HCT116 (cell line): ENCODE measurements at regions of chr1 and their contacts with region 1.

Region 1: GRCh38 chr1:154546264-154547063 is 12.0 kb downstream of the UBE2Q1 start:
- DNase-seq: peak; percentile 63
- ATAC-seq: peak; percentile 98
- H3K4me3 ChIP-seq: no peak overlapping the region
- H3K27ac ChIP-seq: no peak overlapping the region
- H3K4me1 ChIP-seq: peaks cover 0 to 10% of the 10 kb centered on the region in 2 experiments; a peak in 2 of 4 replicates
- H3K27me3 ChIP-seq: 0 out of 2 replicates have a peak, but pooled peaks cover 4% of the 10 kb centered on the region
- CTCF ChIP-seq: peak; percentile 67 to 92 (median 88)
- POLR2A ChIP-seq: no peak
- RAD21 ChIP-seq: peak; percentile 94

Region 2: GRCh38 chr1:154183045-154183915 is 363.2 kb before region 1 on chr1:
- CTCF ChIA-PET with region 1: no interaction called
- POLR2A ChIA-PET with region 1: no interaction called
- RAD21 ChIA-PET with region 1: no interaction called
- intact Hi-C with region 1: loop called (anchors 10 kb)
- DNase-seq: peak; percentile 97
- ATAC-seq: peak; percentile 96
- H3K4me3 ChIP-seq: peak overlapping the region; percentile 90 to 98
- H3K27ac ChIP-seq: peak overlapping the region; percentile 78
- H3K4me1 ChIP-seq: peaks cover 19 to 38% of the 10 kb centered on the region in 2 experiments
- H3K27me3 ChIP-seq: no peaks in the 10 kb centered on the region
- CTCF ChIP-seq: no peak
- POLR2A ChIP-seq: peak; percentile 90
- RAD21 ChIP-seq: no peak

Region 3: GRCh38 chr1:154324669-154325582 is 221.5 kb before region 1 on chr1 and contains the start of gene ATP8B2:
- CTCF ChIA-PET with region 1: interaction called, 8 read pairs
- POLR2A ChIA-PET with region 1: no interaction called
- RAD21 ChIA-PET with region 1: interaction called in 1 of 2 experiments, 4 read pairs
- intact Hi-C with region 1: loop called (anchors 10 kb)
- DNase-seq: peak; percentile 59
- ATAC-seq: peak; percentile 65
- H3K4me3 ChIP-seq: peak within 1 kb of the TSS; percentile 77 to 79
- H3K27ac ChIP-seq: peak within 1 kb of the TSS; percentile 79
- H3K4me1 ChIP-seq: peaks cover 26 to 49% of the 10 kb centered on the region in 2 experiments
- H3K27me3 ChIP-seq: no peaks in the 10 kb centered on the region
- CTCF ChIP-seq: peak; percentile 75 to 94 (median 93)
- POLR2A ChIP-seq: no peak
- RAD21 ChIP-seq: peak; percentile 49
- total RNA-seq, gene ATP8B2: 22.1 TPM

Region 4: GRCh38 chr1:154352581-154353459 is 193.6 kb before region 1 on chr1:
- CTCF ChIA-PET with region 1: interaction called, 3 read pairs
- POLR2A ChIA-PET with region 1: no interaction called
- RAD21 ChIA-PET with region 1: interaction called in 1 of 2 experiments, 3 read pairs
- intact Hi-C with region 1: loop called (anchors 10 kb)
- DNase-seq: no peak
- ATAC-seq: peak; percentile 76
- H3K4me3 ChIP-seq: peak overlapping the region; percentile 45 to 57
- H3K27ac ChIP-seq: peak overlapping the region; percentile 72
- H3K4me1 ChIP-seq: peaks cover 21 to 25% of the 10 kb centered on the region in 2 experiments
- H3K27me3 ChIP-seq: no peaks in the 10 kb centered on the region
- CTCF ChIP-seq: no peak
- POLR2A ChIP-seq: no peak
- RAD21 ChIP-seq: no peak

Region 5: GRCh38 chr1:154533952-154534844 is 12.3 kb before region 1 on chr1:
- CTCF ChIA-PET with region 1: interaction called, 15 read pairs
- POLR2A ChIA-PET with region 1: no interaction called
- RAD21 ChIA-PET with region 1: interaction called, 3 to 13 read pairs
- intact Hi-C with region 1: no loop called
- DNase-seq: peak; percentile 62
- ATAC-seq: peak; percentile 92
- H3K4me3 ChIP-seq: no peak overlapping the region
- H3K27ac ChIP-seq: no peak overlapping the region
- H3K4me1 ChIP-seq: no peaks in the 10 kb centered on the region
- H3K27me3 ChIP-seq: 0 out of 2 replicates have a peak, but pooled peaks cover 2% of the 10 kb centered on the region
- CTCF ChIP-seq: peak; percentile 73 to 78 (median 75); a peak in 5 of 6 replicates
- POLR2A ChIP-seq: no peak
- RAD21 ChIP-seq: peak; percentile 77